CD4-positive, alpha-beta T cell (primary cell): ENCODE measurements at regions of chr3 and their contacts with region 1.

Region 1: DNA sequence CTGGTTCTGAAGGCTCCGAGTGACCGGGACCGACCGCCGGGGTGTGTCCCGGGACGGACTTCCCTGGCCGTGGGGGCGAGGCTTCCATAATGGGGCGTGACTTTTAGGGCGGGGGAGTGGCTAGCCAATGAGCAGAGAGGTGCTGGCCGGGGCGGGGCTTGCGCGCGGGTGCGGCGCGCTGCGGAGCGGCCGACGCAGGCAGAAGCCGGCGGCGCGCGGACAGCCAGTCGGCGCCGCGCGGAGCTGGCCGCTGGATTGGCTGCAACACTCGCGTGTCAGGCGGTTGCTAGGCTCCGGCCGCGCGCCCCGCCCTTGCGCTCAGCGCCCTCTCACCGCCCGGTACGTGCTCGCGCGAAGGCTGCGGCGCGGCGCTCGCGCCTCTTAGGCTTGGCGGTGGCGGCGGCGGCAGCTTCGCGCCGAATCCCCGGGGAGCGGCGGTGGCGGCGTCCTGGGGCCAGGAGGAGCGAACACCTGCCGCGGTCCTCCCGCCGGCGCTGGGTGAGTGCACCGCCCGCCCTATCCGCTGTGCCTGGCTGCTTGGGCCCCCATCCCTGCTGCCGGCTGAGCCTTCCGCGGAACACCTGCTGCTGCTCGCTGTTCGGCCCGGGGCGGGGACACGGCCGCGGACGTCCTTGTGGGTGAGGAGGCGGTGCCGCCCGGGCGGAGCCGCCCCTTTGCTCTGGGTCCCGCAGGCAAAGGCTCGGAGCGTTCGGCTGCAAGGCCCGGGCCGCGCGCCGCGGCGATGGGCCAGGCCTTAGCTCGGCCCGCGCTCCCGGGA is at the start of gene DAG1:
- DNase-seq: peak; percentile 88 to 99 (median 94)
- ATAC-seq: peak; percentile 82
- H3K4me3 ChIP-seq: peak within 1 kb of the TSS; percentile 78
- H3K4me3 Mint-ChIP-seq: peak within 1 kb of the TSS; percentile 91
- H3K27ac ChIP-seq: peak within 1 kb of the TSS; percentile 86 to 88
- H3K27ac Mint-ChIP-seq: peak within 1 kb of the TSS; percentile 95
- H3K4me1 ChIP-seq: peaks cover 26% of the 10 kb centered on the region
- H3K4me1 Mint-ChIP-seq: peaks cover 23% of the 10 kb centered on the region
- H3K27me3 ChIP-seq: no peaks in the 10 kb centered on the region
- H3K27me3 Mint-ChIP-seq: no peaks in the 10 kb centered on the region
- CTCF ChIP-seq: no peak
- total RNA-seq, gene DAG1: 15.0 to 18.3 TPM

Region 2: DNA sequence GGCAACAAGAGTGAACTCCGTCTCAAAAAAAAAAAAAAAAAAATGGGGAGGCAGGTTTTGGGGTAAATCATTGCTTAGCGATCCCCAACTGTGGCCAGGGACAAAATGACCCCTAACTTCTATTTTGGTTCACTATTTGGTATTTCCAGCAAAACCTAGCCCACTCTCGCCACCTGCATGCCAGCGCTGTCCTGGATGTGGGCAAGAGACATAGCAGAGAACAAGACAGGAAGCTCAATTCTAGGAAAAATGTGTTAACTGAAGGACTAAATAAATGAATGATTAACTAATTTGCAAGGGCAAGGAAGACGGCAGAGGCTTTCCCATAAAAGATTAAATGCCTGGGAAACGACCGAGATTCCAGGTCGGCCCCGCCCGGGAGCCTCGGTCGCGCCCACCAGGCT is 41.4 kb before region 1 on chr3:
- CTCF ChIA-PET with region 1: interaction called, 3 read pairs
- POLR2A ChIA-PET with region 1: interaction called, 10 read pairs
- intact Hi-C with region 1: loop called in 1 of 2 experiments (anchors 1 kb)
- DNase-seq: peak in 2 of 14 experiments; percentile 24 to 32
- ATAC-seq: peak; percentile 2
- H3K4me3 ChIP-seq: peak overlapping the region; percentile 60
- H3K4me3 Mint-ChIP-seq: peak overlapping the region; percentile 95
- H3K27ac ChIP-seq: peak overlapping the region; percentile 66 to 85
- H3K27ac Mint-ChIP-seq: peak overlapping the region; percentile 89
- H3K4me1 ChIP-seq: peaks cover 33% of the 10 kb centered on the region
- H3K4me1 Mint-ChIP-seq: peaks cover 32% of the 10 kb centered on the region
- H3K27me3 ChIP-seq: no peaks in the 10 kb centered on the region
- H3K27me3 Mint-ChIP-seq: no peaks in the 10 kb centered on the region
- CTCF ChIP-seq: no peak

Region 3: DNA sequence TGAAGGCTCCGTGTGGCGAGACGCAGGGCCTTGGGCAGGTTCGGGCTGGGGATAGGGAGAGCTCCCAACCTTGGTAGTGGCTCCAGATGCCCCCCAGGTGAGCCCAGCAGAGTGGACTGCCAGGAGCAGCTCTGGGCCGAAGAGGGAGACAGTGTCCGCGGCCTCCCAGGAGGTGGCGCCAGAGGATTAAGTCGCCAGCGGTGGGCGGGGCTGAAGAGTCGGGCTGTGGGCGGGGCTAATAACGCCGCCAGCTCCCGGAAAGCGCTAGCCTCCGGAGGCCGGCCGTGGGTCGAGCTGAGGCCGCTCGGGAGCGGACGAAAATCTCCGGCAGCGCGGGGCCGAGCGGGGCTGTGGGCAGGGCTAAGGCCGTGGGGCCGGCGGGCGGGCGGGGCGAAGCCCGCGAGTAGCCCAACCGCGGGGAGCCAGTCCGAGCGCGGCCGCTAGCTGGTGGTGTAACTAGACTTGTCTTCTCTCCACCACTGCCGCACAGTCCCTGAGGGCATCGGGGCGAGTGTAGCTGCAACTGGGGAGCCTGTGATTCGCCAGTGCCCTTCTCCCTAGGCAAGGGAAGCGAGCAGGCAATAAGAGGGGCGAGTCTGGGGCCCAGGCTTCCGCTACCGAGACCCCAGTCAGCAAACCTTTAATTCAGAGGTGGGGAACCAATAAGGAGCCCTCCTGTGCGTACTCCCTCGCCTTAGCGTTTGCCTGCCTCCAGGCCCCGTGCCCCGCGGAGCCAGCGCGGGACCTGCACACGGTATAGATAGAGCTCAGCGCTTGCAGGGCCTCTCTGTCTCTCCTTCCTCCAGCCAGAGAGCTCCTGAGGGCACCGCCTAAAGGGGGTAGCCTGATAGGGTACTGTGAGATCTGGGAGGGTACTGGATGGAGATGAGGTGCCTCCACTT is 69.8 kb after region 1 on chr3:
- CTCF ChIA-PET with region 1: interaction called, 12 read pairs
- POLR2A ChIA-PET with region 1: interaction called, 9 read pairs
- intact Hi-C with region 1: loop called in 1 of 2 experiments (anchors 2 kb)
- DNase-seq: peak; percentile 81 to 96 (median 92)
- ATAC-seq: peak; percentile 97
- H3K4me3 ChIP-seq: peak overlapping the region; percentile 61
- H3K4me3 Mint-ChIP-seq: peak overlapping the region; percentile 86
- H3K27ac ChIP-seq: peak overlapping the region; percentile 41 to 53
- H3K27ac Mint-ChIP-seq: peak overlapping the region; percentile 63
- H3K4me1 ChIP-seq: peaks cover 11% of the 10 kb centered on the region
- H3K4me1 Mint-ChIP-seq: no peaks in the 10 kb centered on the region
- H3K27me3 ChIP-seq: no peaks in the 10 kb centered on the region
- H3K27me3 Mint-ChIP-seq: peaks cover 12% of the 10 kb centered on the region
- CTCF ChIP-seq: peak; percentile 91